ENCODE measurements at regions of chr3 and their contacts with region 1.

Region 1: GRCh38 chr3:155323063-155323666 is 29.7 kb upstream of the STRIT1 start:
- DNase-seq: no peak
- ATAC-seq: peak; percentile 87 to 93 (median 89)
- H3K4me3 ChIP-seq: no peak overlapping the region
- H3K27ac ChIP-seq: no peak overlapping the region
- H3K4me1 ChIP-seq: no peaks in the 10 kb centered on the region
- H3K27me3 ChIP-seq: no peaks in the 10 kb centered on the region
- CTCF ChIP-seq: peak; percentile 60 to 79 (median 74)
- POLR2A ChIP-seq: no peak

Region 2: GRCh38 chr3:154886437-154886836 is 436.7 kb before region 1 on chr3:
- intact Hi-C with region 1: loop called in 1 of 2 experiments (anchors 10 kb)
- DNase-seq: no peak
- ATAC-seq: no peak
- H3K4me3 ChIP-seq: no peak overlapping the region
- H3K27ac ChIP-seq: no peak overlapping the region
- H3K4me1 ChIP-seq: no peaks in the 10 kb centered on the region
- H3K27me3 ChIP-seq: no peaks in the 10 kb centered on the region
- CTCF ChIP-seq: no peak
- POLR2A ChIP-seq: no peak